PC-9 (cell line): ENCODE measurements at regions of chr5 and their contacts with region 1.

Region 1: DNA sequence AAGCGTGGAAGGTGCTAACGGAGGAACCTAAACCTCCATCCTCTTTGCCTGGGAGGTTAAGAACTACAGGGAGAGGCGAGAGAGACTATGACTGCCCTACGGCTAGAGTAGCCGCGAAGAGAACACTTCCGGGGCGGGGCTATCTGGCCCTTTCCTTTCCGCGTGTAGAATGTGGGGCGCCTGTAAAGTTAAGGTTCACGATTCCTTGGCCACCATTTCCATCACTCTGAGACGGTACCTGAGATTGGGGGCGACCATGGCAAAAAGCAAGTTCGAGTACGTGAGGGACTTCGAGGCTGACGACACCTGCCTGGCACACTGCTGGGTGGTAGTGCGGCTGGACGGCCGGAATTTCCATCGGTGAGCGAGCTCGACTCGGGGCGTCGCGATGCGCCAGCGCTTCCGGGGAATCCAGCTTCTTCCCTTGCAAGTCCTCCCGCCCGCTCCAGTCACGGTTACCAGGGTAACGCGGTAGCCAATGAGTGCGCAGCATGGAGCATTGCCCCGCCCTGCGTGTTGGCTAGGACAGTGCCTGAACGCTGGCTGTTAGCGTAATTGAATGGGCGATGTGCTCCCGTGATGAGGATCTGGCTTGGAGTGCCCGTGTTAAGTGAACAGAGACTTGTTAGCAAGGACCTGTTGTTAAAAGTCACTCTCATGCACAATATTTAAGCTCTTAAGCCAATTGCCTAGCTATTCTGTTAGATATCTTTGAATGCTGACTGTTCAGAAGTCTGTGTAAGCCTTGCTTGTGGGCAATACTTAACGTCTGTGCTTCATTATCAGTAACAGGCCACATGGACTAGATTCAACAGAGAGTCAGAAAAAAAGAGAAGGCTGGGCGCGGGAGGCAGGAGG is at the start of gene THG1L:
- DNase-seq: peak; percentile 94 to 98
- H3K4me3 ChIP-seq: peak within 1 kb of the TSS; percentile 69
- H3K27ac ChIP-seq: peak within 1 kb of the TSS; percentile 80
- H3K4me1 ChIP-seq: 0 out of 2 replicates have a peak, but pooled peaks cover 4% of the 10 kb centered on the region
- H3K27me3 ChIP-seq: no peaks in the 10 kb centered on the region
- CTCF ChIP-seq: no peak
- total RNA-seq, gene THG1L: 20.9 and 25.3 TPM in 2 replicates

Region 2: DNA sequence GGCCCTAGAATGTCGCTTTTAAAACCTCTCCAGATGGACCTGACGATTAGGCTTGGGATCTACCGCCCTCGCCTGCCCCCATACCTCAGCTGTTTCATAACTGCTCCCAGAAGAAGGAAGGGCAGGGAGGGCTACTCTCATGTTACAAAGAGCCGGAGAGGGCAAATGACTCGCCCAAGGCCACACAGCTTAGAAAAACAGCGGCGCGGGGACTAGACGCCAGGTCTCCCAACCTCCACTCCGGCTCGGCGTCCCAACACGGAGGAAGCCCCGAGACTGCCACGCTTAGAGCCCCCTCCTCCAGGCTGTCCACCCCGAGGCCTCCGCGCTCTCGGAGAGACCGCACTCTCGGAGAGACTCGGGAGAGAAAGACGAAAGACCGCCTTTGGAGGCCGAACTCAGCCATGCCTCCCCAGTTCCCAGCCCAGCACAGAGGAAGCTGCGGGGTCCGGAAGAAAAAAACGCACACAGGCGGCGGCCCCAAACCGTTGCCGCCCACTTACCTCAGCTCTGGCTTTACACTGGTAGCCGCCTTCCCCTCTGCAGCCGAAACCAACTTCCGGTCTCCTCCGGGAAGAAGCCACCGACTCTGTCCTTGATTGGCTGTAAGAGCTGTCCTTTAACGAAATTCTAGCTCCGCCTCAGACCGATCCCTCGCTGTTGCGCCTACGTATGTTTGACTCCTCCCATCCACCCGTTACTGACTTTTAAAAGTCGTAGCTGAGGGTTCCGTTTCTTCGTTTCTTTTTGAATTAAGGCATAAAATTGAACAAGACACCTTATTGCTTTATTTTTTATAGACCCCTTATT is 589.0 kb before region 1 on chr5 and contains the start of gene MED7:
- CTCF ChIA-PET with region 1: no interaction called
- POLR2A ChIA-PET with region 1: no interaction called
- intact Hi-C with region 1: loop called (anchors 2 kb)
- DNase-seq: peak; percentile 93
- H3K4me3 ChIP-seq: peak within 1 kb of the TSS; percentile 69
- H3K27ac ChIP-seq: peak within 1 kb of the TSS; percentile 57
- H3K4me1 ChIP-seq: peaks cover 11% of the 10 kb centered on the region
- H3K27me3 ChIP-seq: peaks cover 5% of the 10 kb centered on the region; the same call in 1 of the 2 replicates
- CTCF ChIP-seq: no peak
- total RNA-seq, gene MED7: 9.4 and 11.8 TPM in 2 replicates

Region 3: DNA sequence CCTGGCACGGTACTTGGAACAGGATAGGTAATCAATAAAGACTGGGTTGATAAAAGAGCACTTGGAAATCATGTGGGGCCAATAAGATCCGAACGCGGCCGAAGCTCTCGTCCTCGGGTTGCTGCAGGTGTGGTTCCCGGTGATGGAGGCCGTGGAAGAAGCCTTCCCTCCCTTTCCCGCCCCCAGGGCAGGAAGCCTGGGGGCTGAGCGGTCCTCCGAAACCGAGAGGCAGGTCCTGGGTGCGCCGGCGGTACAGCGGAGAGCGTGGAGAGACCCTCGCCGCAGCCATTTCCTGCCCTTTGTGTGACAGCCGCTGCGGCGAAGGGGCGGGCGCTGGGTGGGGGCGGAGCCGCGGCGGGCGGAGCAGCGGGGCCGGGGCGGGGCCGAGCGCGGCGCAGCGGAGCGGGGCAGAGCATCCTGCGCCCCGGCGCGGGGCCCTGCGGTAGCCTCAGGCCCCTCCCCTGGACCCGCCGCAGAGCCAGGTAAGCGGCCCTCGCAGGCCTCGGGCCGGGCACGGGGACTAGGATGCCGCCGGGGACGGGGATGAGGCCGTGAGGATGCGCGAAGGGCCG is 465.7 kb before region 1 on chr5 and contains the start of gene CYFIP2:
- CTCF ChIA-PET with region 1: interaction called, 15 read pairs
- POLR2A ChIA-PET with region 1: no interaction called
- intact Hi-C with region 1: no loop called
- DNase-seq: peak in 1 of 2 experiments; percentile 10
- H3K4me3 ChIP-seq: no peak within 1 kb of the TSS
- H3K27ac ChIP-seq: no peak within 1 kb of the TSS
- H3K4me1 ChIP-seq: no peaks in the 10 kb centered on the region
- H3K27me3 ChIP-seq: peaks cover 30% of the 10 kb centered on the region
- CTCF ChIP-seq: no peak
- total RNA-seq, gene CYFIP2: not detected in 2 replicates

Region 4: GRCh38 chr5:157568717-157569116 is 162.8 kb before region 1 on chr5:
- CTCF ChIA-PET with region 1: no interaction called
- POLR2A ChIA-PET with region 1: interaction called, 12 read pairs
- intact Hi-C with region 1: no loop called
- DNase-seq: no peak
- H3K4me3 ChIP-seq: no peak overlapping the region
- H3K27ac ChIP-seq: no peak overlapping the region
- H3K4me1 ChIP-seq: peaks cover 7% of the 10 kb centered on the region; the same call in 1 of the 2 replicates
- H3K27me3 ChIP-seq: no peaks in the 10 kb centered on the region
- CTCF ChIP-seq: no peak